Activated CD8-positive, alpha-beta T cell treated with anti-CD3 and anti-CD28 coated beads, Interleukin-2, amount 10 ng/mL, durations not matched to agents 7 days and 5 days (primary cell): ENCODE measurements at regions of chr6 and their contacts with region 1.

Region 1: GRCh38 chr6:157314705-157315321 is 8.5 kb downstream of the TMEM242 start:
- DNase-seq: peak; percentile 59
- ATAC-seq: peak; percentile 91
- H3K4me3 Mint-ChIP-seq: no peak overlapping the region
- H3K27ac Mint-ChIP-seq: no peak overlapping the region
- H3K4me1 Mint-ChIP-seq: peaks cover 5% of the 10 kb centered on the region
- H3K27me3 Mint-ChIP-seq: no peaks in the 10 kb centered on the region

Region 2: DNA sequence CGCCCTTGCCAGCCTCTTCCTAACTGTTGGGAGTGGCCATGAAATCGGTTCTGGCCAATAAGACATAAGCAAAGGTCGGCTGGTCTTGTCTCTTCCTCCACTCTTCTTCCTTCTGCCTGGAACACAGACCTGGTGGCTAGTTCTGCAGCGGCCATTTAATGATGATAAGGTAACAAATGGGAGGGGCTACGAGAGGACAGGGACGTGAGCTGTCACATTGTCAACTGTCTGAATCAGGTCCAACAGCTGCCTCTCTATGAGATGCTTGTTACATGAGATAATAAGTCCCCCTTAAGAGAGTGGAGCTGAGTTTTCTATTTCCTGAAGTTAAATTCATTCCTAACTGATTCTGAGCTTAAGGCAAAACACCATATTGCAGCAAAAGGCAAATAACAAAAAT is 21.0 kb after region 1 on chr6:
- CTCF ChIA-PET with region 1: interaction called, 24 read pairs
- POLR2A ChIA-PET with region 1: no interaction called
- DNase-seq: no peak
- ATAC-seq: no peak
- H3K4me3 Mint-ChIP-seq: no peak overlapping the region
- H3K27ac Mint-ChIP-seq: no peak overlapping the region
- H3K4me1 Mint-ChIP-seq: no peaks in the 10 kb centered on the region
- H3K27me3 Mint-ChIP-seq: peaks cover 44% of the 10 kb centered on the region

Region 3: DNA sequence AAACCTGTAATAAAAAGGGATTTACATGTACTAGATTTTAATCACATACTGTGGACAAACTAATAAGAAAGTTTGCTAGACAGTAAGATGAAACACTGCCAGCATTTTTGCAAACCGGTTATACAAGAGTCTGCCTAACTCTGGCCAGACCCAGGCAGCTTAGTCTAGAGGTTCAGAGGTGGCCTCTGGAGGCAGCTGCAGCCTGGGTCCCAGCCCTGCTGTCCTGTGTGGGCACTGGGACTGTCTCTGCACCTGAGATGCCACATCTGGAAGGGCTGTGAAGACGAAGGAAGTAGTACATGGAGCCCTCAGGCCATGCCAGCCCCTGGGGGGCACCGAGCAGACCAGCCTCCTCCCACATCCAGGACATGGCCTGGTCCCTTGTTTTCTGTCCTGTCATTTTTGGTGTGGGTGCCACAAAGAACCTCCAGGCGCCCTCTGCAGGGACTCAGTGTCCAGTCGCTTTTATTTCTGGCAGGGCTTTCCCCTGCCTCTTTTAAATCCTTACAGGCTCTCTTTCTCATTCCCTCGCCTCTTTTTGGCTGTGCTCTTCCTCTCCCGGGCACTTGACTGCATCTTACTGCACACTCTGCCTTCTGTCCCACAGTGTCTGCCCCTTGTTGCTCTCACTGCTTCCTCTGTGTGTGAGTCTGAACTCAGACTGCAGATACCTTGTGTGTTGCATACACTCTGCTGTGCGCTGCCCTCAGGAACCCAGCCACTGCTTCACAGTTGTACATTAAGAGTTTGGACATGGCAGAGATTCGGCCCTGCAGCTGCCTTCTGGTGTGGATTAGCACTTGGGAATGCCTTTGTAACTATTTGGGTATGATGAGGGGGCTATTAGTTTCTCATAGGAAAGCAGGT is 282.9 kb after region 1 on chr6:
- CTCF ChIA-PET with region 1: interaction called, 27 read pairs
- POLR2A ChIA-PET with region 1: no interaction called
- DNase-seq: peak; percentile 62
- ATAC-seq: peak; percentile 66
- H3K4me3 Mint-ChIP-seq: no peak overlapping the region
- H3K27ac Mint-ChIP-seq: peak overlapping the region; percentile 71
- H3K4me1 Mint-ChIP-seq: peaks cover 22% of the 10 kb centered on the region
- H3K27me3 Mint-ChIP-seq: no peaks in the 10 kb centered on the region

Region 4: DNA sequence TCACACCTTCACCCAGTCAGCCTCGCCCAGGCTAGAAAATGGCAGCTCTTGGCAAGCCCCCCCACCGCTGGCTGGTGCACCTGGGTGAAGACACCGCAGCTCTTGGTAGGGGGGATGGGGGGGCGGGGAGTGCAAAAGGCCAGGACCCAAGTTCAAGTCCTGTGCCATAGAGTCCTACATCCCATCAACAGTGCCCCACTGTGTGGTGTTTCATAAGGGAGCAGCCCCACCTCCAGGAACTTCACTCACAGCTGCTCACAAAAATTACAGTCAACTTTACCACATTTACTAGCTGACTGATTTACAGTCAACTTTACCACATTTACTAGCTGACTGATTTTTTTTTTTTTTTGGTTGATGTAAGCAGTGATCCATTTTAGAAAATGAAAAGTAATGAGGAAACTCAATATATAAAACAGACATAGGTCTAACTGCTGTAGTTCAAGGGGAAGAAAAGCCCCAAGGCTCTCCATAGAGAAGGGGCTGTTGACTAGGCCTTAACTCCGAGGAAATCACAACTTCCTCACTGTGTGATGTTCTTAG is 299.3 kb after region 1 on chr6:
- CTCF ChIA-PET with region 1: interaction called, 19 read pairs
- POLR2A ChIA-PET with region 1: no interaction called
- DNase-seq: no peak
- ATAC-seq: no peak
- H3K4me3 Mint-ChIP-seq: no peak overlapping the region
- H3K27ac Mint-ChIP-seq: no peak overlapping the region
- H3K4me1 Mint-ChIP-seq: no peaks in the 10 kb centered on the region
- H3K27me3 Mint-ChIP-seq: no peaks in the 10 kb centered on the region

Region 5: GRCh38 chr6:157667211-157668008 is 352.6 kb after region 1 on chr6:
- CTCF ChIA-PET with region 1: interaction called, 86 read pairs
- POLR2A ChIA-PET with region 1: no interaction called
- DNase-seq: peak; percentile 74
- ATAC-seq: peak; percentile 81
- H3K4me3 Mint-ChIP-seq: no peak overlapping the region
- H3K27ac Mint-ChIP-seq: no peak overlapping the region
- H3K4me1 Mint-ChIP-seq: peaks cover 22% of the 10 kb centered on the region
- H3K27me3 Mint-ChIP-seq: peaks cover 6% of the 10 kb centered on the region

Region 6: DNA sequence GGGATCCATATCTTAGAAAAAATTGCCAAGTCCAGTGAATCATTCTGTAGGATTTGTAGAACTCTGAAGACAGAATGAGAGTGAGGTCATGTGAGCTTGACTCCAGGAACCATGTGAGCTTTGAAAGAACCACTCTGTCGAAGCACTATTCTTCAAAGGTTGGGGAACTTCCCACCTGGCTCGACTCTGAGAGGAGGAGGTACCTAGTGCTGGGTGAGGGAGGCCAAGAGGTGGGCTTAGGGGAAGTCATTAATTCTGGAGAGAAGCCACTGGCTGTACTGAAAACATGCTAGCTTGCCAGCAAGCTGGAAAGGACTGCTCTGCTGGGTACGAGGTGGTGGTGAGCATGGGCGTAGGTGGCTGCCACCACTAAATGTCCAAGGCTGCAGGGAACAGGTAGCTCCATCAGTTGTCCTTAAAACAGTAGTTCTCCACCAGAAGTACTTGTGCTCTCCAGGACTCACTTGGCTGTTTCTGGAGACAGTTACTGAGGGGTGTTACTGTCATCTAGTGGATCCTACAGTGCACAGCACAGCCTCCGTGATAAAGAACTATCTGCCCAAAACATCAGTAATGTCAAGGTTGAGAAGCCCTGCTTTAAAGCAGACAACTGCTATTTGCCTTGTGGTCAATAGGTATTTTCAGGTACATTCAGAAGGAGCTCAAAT is 632.2 kb after region 1 on chr6:
- CTCF ChIA-PET with region 1: interaction called, 12 read pairs
- POLR2A ChIA-PET with region 1: no interaction called
- DNase-seq: no peak
- ATAC-seq: peak; percentile 78
- H3K4me3 Mint-ChIP-seq: no peak overlapping the region
- H3K27ac Mint-ChIP-seq: no peak overlapping the region
- H3K4me1 Mint-ChIP-seq: peaks cover 7% of the 10 kb centered on the region
- H3K27me3 Mint-ChIP-seq: peaks cover 12% of the 10 kb centered on the region